ENCODE measurements at regions of chr15 and their contacts with region 1.

Region 1: DNA sequence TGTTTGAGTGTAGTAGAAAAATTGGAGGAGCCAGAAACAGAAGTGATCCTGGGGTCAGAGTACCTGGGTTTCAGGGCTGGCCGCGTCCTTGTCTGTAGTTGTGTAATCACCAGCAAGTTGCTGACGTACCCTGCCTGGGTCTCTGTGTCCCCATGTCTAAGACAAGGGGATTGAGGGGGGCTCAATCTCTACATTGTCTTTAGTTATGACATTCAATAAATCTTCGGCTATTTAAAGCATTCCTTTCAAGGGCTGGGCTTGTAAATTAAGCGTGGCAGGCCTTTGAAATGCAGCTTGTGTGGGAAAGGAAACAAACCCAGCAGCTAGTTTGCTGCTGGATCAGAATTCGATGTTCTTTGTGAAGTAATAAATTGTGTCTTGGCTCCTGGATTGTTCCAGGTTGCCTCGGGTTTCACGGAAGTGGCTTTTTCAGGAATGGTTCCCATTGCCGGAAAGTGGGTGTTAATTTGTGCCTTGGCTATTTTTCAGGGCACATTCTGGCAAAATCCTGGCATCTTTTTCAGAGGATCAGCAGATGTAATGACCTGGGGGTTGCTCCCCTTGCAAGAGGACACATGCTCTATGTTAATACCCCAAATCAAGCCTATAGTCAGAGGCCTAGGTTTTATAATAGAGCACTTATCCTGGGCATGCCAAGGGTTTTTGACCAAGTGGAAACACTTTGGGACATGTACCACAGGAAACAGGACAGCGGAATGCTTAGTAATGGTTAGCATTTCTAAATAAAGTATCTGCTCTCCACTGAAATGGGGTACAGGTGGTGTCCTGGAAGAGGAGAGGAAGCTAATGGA is 294.8 kb upstream of the NR2E3 start:
- DNase-seq: peak in 1 of 2 donors; percentile 71
- H3K4me3 ChIP-seq: no peak overlapping the region
- H3K27ac ChIP-seq: peak overlapping the region; percentile 78 to 84
- H3K4me1 ChIP-seq: peaks cover 0 to 3% of the 10 kb centered on the region in 2 donors
- H3K27me3 ChIP-seq: no peaks in the 10 kb centered on the region
- CTCF ChIP-seq: no peak
- POLR2A ChIP-seq: no peak

Region 2: GRCh38 chr15:70252056-70252950 is 1263.3 kb before region 1 on chr15:
- intact Hi-C with region 1: loop called (anchors 5 kb)
- DNase-seq: no peak
- H3K4me3 ChIP-seq: no peak overlapping the region
- H3K27ac ChIP-seq: no peak overlapping the region
- H3K4me1 ChIP-seq: no peaks in the 10 kb centered on the region
- H3K27me3 ChIP-seq: no peaks in the 10 kb centered on the region
- CTCF ChIP-seq: no peak
- POLR2A ChIP-seq: no peak

Region 3: DNA sequence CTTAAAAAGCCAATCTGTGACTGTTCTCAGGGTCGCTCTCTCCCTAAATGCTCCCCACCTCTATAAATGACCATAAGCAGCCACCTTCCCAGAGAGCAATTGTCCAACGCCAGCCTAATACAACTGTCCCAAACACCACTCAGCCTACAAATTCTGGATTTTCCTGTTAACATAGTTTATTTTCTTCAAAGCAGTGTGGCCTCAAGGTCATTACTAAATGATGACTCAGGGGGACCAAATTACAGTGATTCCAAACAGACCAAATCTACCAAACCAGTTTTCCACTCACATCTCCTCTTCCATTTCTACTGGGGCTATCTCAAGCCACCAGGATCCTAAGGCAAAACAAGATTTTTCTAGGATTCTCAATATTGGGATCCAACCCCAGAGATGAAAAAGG is 837.7 kb after region 1 on chr15:
- intact Hi-C with region 1: no loop called
- DNase-seq: no peak
- H3K4me3 ChIP-seq: no peak overlapping the region
- H3K27ac ChIP-seq: no peak overlapping the region
- H3K4me1 ChIP-seq: no peaks in the 10 kb centered on the region
- H3K27me3 ChIP-seq: no peaks in the 10 kb centered on the region
- CTCF ChIP-seq: no peak
- POLR2A ChIP-seq: no peak